PC-9 (cell line): ENCODE measurements at regions of chr6 and their contacts with region 1.

Region 1: DNA sequence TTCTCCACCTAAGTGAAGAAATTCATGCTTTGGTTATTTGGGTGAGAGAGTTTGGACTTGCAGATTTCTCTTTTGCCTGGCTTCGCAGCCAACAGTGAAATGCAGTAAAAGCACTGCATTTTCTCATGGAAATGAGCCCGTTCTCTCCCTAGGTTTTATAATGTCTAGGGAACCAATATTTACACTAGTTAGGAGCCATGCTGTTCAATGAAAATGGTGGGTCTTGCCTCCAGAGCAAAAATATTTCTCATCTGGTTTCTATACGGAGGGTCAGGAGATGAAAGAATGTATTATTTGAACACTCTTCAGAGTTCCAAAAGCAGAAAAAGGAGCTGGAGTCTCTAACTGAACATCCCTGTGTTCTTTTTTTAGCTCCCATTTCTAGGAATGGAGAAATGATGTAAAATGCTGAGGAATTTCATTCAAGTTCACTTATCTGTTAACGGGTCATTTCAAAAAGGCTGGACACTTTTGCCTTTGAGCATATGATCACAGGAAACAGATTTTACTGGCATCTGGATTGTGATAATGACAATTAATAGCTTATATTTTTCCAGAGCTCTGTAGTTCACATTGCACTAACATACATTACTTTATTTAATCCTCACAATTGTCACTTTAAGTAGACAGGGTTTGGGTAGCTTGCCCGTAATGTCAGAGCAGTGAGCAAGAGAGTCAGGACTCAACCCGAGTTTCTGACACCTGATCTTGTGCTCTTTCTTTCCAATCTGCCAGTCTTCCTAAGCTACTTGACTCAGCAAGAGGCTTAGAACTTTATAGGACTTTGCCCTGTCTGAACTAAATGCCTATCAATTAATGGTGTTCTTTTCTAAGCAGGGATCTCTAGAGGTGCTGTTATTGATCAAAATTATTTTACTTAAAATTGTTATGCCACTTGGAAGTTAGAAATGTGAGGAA is 78.0 kb downstream of the PPP1R14C start:
- DNase-seq: no peak
- H3K4me3 ChIP-seq: no peak overlapping the region
- H3K27ac ChIP-seq: no peak overlapping the region
- H3K4me1 ChIP-seq: no peaks in the 10 kb centered on the region
- H3K27me3 ChIP-seq: no peaks in the 10 kb centered on the region
- CTCF ChIP-seq: no peak

Region 2: DNA sequence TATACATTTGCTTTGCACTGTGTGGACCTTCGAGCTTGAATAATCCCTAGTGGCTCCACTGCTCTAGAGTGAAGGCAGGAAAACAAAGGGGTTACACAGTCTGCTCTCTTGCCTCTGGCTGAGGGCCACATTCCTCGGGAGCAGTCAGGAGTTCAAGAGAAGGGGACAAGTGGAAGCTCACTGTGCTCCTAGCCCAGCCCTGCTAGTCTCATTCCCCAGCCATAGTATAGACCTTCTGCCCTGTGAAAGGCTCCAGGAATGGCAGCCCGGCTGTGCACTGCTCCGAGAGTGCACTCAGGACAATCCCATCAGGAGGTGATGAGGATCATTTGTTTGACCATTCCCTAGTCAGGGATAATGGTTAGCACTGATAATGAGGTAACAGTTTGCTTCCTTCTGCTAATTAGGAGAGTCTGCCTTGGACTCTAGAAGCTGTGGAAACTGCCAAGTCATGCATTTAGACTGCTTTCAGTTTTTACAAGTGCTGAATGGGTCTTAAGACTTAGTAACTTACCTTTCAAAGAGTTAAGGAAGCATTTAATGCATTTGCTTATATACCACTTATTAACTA is 156.4 kb after region 1 on chr6:
- CTCF ChIA-PET with region 1: no interaction called
- POLR2A ChIA-PET with region 1: no interaction called
- intact Hi-C with region 1: no loop called
- DNase-seq: peak in 1 of 2 experiments; percentile 46
- H3K4me3 ChIP-seq: no peak overlapping the region
- H3K27ac ChIP-seq: no peak overlapping the region
- H3K4me1 ChIP-seq: 0 out of 2 replicates have a peak, but pooled peaks cover 7% of the 10 kb centered on the region
- H3K27me3 ChIP-seq: no peaks in the 10 kb centered on the region
- CTCF ChIP-seq: no peak

Region 3: DNA sequence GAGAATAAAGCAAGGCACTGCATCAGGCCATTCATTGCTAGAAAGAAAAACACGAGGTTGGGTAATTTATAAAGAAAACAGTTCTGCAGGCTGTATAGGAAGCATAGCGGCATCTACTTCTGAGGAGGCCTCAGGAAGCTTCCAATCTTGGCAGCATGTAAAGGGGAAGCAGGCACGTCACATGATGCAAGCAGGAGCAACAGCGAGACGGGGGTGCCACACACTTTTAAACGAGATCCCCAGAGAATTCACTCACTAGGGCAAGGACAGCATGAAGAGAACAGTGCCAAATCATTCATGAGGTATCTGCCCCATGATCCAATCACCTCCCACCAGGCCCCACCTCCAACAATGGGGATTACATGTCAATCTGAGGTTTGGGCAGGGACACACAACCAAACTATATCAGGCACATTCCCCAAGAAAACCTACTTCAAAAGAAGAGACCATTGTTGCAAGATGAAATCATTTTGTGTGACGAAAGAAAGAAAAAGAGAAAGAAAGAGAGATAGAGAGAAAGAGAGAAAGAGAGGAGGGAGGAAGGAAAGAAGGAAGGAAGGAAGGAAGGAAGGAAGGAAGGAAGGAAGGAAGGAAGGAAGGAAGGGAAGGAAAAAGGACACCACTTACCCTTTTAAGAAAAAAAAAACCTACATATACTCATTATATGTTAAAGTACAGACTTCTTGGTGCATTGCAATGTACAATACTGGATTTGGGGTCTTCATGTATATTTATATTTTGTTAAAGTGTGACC is 282.9 kb after region 1 on chr6:
- CTCF ChIA-PET with region 1: no interaction called
- POLR2A ChIA-PET with region 1: interaction called, 10 read pairs
- intact Hi-C with region 1: no loop called
- DNase-seq: no peak
- H3K4me3 ChIP-seq: no peak overlapping the region
- H3K27ac ChIP-seq: no peak overlapping the region
- H3K4me1 ChIP-seq: no peaks in the 10 kb centered on the region
- H3K27me3 ChIP-seq: no peaks in the 10 kb centered on the region
- CTCF ChIP-seq: no peak

Region 4: GRCh38 chr6:150560004-150560883 is 339.4 kb after region 1 on chr6:
- CTCF ChIA-PET with region 1: no interaction called
- POLR2A ChIA-PET with region 1: no interaction called
- intact Hi-C with region 1: no loop called
- DNase-seq: no peak
- H3K4me3 ChIP-seq: no peak overlapping the region
- H3K27ac ChIP-seq: no peak overlapping the region
- H3K4me1 ChIP-seq: no peaks in the 10 kb centered on the region
- H3K27me3 ChIP-seq: no peaks in the 10 kb centered on the region
- CTCF ChIP-seq: no peak